ENCODE measurements at regions of chr11 and their contacts with region 1.

Region 1: DNA sequence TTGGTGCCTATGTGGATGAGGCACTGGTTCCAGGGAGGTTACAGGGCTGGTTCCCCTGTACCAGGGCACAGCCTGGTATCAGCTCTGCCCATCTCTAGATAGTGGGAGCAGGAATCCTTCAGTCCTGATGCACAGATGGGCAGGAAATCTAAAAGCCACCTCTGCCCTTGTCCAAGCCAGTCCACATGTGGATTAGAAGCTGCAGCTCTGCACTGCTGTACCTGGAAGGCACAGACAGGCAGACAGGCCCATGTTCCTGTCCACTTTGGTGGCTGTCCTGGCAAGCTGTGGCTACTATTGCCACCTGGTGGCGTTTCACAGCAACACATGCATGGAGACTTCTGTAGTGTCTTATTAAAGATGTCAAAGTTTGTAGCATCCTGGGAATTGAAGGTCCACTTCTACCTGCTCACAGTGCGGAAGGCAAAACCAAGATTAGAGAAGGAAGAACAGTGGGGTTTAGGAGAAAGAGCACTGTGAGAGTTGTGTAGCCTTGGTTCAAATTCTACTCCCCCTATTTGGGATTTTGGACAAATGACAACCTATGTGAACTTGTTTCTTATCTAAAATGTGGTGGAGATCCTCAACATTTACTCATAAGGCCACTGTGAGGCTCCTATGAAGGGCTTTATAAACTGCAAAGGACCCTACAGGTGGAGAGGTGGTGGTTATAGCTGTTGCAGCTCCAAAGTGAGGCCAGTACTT is 30.1 kb downstream of the NAV2 start:
- DNase-seq: peak; percentile 45 to 80
- ATAC-seq: peak; percentile 84 to 97
- H3K4me3 ChIP-seq: no peak overlapping the region
- H3K27ac ChIP-seq: 0 out of 6 replicates have a peak overlapping the region, but pooled peaks of 1 of the 2 experiments have one; percentile 15
- H3K4me1 ChIP-seq: 0 out of 3 replicates have a peak, but pooled peaks cover 8% of the 10 kb centered on the region
- CTCF ChIP-seq: peak; percentile 87
- EP300 ChIP-seq: no peak
- POLR2A ChIP-seq: no peak
- RAD21 ChIP-seq: peak; percentile 96

Region 2: DNA sequence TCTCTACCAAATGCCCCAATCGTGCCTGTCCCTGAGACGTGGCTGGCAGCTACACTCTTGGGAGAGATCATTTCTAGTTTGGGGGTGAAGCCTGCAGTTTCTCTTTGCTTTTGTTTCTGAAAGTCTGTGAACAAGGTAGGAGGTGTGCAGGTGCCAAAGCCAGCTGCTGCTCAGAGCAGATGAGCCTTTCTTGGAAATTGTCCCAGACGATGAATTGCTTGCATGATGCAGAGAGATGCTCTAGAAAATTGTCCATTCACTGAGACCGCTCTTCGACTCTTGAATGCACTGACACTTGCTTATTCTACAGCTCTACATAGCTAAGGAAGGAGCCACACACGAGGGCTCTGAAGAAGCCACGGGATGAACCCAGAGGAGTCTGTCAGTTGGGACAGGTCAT is 276.4 kb before region 1 on chr11:
- CTCF ChIA-PET with region 1: no interaction called
- POLR2A ChIA-PET with region 1: no interaction called
- DNase-seq: no peak
- ATAC-seq: no peak
- H3K4me3 ChIP-seq: no peak overlapping the region
- H3K27ac ChIP-seq: no peak overlapping the region
- H3K4me1 ChIP-seq: no peaks in the 10 kb centered on the region
- CTCF ChIP-seq: no peak
- EP300 ChIP-seq: no peak
- POLR2A ChIP-seq: no peak
- RAD21 ChIP-seq: no peak

Region 3: GRCh38 chr11:19561011-19561410 is 181.7 kb before region 1 on chr11:
- CTCF ChIA-PET with region 1: interaction called, 296 read pairs
- POLR2A ChIA-PET with region 1: no interaction called
- DNase-seq: no peak
- ATAC-seq: no peak
- H3K4me3 ChIP-seq: no peak overlapping the region
- H3K27ac ChIP-seq: no peak overlapping the region
- H3K4me1 ChIP-seq: 0 out of 3 replicates have a peak, but pooled peaks cover 4% of the 10 kb centered on the region
- CTCF ChIP-seq: no peak
- EP300 ChIP-seq: no peak
- POLR2A ChIP-seq: no peak
- RAD21 ChIP-seq: no peak

Region 4: DNA sequence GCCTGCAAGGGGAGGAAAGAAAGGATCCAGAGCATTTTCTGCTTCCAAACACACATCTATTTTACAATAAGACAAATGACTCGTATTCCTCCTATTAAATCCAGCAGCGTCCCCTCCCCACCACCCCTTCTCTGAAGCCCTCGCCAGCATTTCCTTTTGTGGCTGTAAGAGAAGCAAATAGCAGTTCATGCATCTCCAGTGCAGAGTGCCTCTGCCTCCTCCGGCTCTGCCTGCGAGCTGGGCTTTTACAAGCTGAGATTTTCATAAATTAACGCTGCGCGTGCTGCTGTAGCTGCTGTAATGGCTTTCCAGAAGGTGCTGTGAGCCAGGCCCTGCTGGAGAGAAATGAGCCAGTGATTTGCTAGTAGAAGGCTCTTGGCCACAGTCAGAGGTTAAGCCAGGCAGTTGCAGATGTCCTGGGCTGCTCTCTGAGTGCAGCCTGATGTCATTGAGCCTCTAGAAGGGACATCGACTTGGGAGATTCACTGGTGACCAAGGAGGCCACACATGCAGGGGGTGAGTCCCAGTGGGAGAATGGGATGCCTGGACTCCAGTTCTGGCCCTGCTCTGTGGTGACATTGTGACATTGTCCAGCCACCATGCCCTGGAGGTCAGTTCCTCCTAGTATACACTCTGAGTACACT is 164.6 kb before region 1 on chr11:
- CTCF ChIA-PET with region 1: interaction called, 29 read pairs
- POLR2A ChIA-PET with region 1: no interaction called
- DNase-seq: no peak
- ATAC-seq: no peak
- H3K4me3 ChIP-seq: no peak overlapping the region
- H3K27ac ChIP-seq: no peak overlapping the region
- H3K4me1 ChIP-seq: no peaks in the 10 kb centered on the region
- CTCF ChIP-seq: no peak
- EP300 ChIP-seq: no peak
- POLR2A ChIP-seq: no peak
- RAD21 ChIP-seq: no peak

Region 5: DNA sequence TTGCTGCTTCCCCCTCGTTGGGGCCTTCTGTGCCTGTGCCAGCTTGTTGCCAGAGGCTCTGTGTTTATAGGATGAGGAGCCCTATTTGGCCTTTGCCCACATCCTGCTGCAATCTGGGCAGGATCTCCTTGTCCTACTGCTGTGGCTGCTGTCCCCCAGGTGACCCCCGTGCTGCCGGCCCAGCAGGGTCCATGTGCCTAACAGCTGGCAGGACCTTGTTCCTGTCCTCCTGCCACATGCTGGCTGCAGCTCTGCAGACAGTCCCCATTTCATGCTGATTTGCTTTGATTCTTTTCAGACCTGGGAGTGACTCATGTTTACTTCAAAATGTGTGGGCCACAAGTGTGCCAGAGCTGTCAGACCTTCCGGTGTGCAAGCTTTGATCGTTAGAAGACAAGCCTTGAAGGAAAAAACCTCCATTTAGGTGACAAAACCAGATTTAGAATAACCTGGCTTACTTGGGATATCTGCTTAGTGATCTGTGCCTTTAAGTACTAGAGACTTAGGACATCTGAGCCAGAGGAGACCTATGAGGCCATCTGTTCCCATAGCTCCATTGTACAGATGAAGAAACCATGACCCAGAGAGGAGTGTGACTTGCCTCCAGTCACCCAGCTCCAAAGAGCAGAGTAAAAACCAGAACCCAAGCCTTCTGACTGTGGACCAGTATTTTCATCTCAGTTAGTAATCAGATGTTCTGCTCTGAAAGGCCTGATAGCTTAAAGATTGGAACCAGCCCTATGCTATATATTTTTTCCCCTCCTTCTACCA is 19.0 kb before region 1 on chr11:
- CTCF ChIA-PET with region 1: interaction called, 23 read pairs
- POLR2A ChIA-PET with region 1: no interaction called
- DNase-seq: no peak
- ATAC-seq: no peak; a peak in 1 of 6 replicates
- H3K4me3 ChIP-seq: no peak overlapping the region
- H3K27ac ChIP-seq: peak overlapping the region; percentile 25 to 59; a peak in 3 of 6 replicates
- H3K4me1 ChIP-seq: peaks cover 18% of the 10 kb centered on the region
- CTCF ChIP-seq: no peak
- EP300 ChIP-seq: no peak
- POLR2A ChIP-seq: no peak
- RAD21 ChIP-seq: no peak

Region 6: DNA sequence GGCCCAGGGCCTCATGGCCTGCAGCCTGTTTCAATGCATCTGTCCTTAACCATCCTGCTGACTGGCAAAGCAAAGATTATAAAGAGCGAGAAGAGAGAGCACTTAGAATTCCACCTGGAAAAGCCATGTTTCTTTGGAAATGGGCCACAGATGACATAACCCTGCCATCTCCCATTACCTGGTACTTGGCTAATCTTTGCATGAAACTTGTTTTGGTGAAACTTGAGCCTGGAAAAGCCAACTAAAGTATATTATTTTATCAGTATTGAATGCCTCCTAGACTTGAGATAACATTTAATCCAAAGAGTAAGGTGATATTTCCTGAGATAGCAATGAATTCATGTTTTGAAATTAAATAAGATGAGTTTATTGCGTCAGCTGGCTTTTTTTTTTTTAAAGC is 42.5 kb after region 1 on chr11:
- CTCF ChIA-PET with region 1: no interaction called
- POLR2A ChIA-PET with region 1: no interaction called
- DNase-seq: no peak
- ATAC-seq: no peak
- H3K4me3 ChIP-seq: no peak overlapping the region
- H3K27ac ChIP-seq: no peak overlapping the region
- H3K4me1 ChIP-seq: no peaks in the 10 kb centered on the region
- CTCF ChIP-seq: no peak
- EP300 ChIP-seq: no peak
- POLR2A ChIP-seq: no peak
- RAD21 ChIP-seq: no peak

Region 7: GRCh38 chr11:19808076-19808911 is 65.6 kb after region 1 on chr11:
- CTCF ChIA-PET with region 1: interaction called, 11 read pairs
- POLR2A ChIA-PET with region 1: no interaction called
- DNase-seq: no peak
- ATAC-seq: no peak
- H3K4me3 ChIP-seq: no peak overlapping the region
- H3K27ac ChIP-seq: no peak overlapping the region
- H3K4me1 ChIP-seq: no peaks in the 10 kb centered on the region
- CTCF ChIP-seq: peak; percentile 53
- EP300 ChIP-seq: no peak
- POLR2A ChIP-seq: no peak
- RAD21 ChIP-seq: peak; percentile 47; a peak in 4 of 5 replicates

Region 8: GRCh38 chr11:19880088-19880345 is 137.3 kb after region 1 on chr11:
- CTCF ChIA-PET with region 1: no interaction called
- POLR2A ChIA-PET with region 1: no interaction called
- DNase-seq: no peak
- ATAC-seq: no peak
- H3K4me3 ChIP-seq: no peak overlapping the region
- H3K27ac ChIP-seq: no peak overlapping the region
- H3K4me1 ChIP-seq: no peaks in the 10 kb centered on the region
- CTCF ChIP-seq: no peak
- EP300 ChIP-seq: no peak
- POLR2A ChIP-seq: no peak
- RAD21 ChIP-seq: no peak